ENCODE measurements at regions of chr4 and their contacts with region 1.

Region 1: DNA sequence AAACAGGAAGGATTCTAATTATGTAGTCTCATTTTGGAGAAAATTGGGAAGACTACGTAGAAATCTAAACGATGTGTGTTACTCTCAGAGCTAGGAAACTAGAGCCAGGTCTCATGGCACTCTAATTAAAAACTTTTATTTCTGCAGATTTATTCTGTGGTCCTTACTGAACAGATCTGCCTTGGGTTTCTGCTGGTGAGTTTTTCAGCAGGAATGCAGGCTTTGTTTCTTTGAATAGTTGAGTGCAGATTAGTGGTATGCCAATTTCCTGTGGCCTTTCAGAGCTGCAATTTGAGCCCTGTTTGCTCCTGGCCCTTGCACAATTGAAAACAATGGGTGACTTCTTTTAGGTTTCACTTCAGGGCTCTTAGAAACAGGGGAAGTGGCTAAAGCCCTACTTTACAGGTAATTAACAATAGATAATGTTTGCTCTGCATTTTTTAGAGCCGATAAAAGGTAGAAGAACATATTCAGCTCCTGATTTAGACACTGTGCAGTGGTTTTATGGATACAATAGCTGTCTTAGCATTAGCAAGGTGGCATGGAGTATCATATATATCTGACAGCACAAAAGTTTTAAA is 21.8 kb downstream of the SPRY1 start:
- DNase-seq: peak; percentile 71
- H3K4me3 Mint-ChIP-seq: peak overlapping the region; percentile 57
- H3K27ac Mint-ChIP-seq: peak overlapping the region; percentile 99
- H3K4me1 Mint-ChIP-seq: peaks cover 69% of the 10 kb centered on the region
- H3K27me3 Mint-ChIP-seq: no peaks in the 10 kb centered on the region

Region 2: DNA sequence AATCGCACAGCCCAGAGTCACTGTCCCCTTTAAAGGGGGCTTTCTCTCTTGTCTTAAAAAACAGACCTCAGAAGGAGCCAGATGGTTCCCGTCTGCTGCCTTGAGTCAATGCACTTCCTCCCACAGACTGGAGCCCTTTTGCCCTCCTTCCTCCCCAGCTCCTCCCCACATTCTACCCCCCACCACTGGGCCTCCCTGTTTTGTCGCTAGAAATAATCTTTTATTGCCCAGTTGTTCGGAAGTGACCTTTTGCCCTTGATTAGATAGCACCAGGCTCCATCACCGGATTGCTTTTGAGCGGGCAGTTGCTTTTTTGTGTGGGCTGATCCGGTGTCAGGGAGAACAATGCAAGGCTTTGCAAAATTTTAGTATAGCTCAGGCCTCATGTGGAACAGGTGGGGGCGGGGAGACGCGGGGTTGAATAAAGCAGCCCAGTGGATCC is 25.9 kb after region 1 on chr4:
- intact Hi-C with region 1: loop called (anchors 1 kb)
- DNase-seq: peak; percentile 81
- H3K4me3 Mint-ChIP-seq: peak overlapping the region; percentile 82
- H3K27ac Mint-ChIP-seq: peak overlapping the region; percentile 96
- H3K4me1 Mint-ChIP-seq: peaks cover 24% of the 10 kb centered on the region
- H3K27me3 Mint-ChIP-seq: no peaks in the 10 kb centered on the region

Region 3: GRCh38 chr4:123488916-123489315 is 70.5 kb after region 1 on chr4:
- intact Hi-C with region 1: loop called (anchors 2 kb)
- DNase-seq: peak; percentile 63
- H3K4me3 Mint-ChIP-seq: no peak overlapping the region
- H3K27ac Mint-ChIP-seq: peak overlapping the region; percentile 72
- H3K4me1 Mint-ChIP-seq: peaks cover 14% of the 10 kb centered on the region
- H3K27me3 Mint-ChIP-seq: no peaks in the 10 kb centered on the region

Region 4: DNA sequence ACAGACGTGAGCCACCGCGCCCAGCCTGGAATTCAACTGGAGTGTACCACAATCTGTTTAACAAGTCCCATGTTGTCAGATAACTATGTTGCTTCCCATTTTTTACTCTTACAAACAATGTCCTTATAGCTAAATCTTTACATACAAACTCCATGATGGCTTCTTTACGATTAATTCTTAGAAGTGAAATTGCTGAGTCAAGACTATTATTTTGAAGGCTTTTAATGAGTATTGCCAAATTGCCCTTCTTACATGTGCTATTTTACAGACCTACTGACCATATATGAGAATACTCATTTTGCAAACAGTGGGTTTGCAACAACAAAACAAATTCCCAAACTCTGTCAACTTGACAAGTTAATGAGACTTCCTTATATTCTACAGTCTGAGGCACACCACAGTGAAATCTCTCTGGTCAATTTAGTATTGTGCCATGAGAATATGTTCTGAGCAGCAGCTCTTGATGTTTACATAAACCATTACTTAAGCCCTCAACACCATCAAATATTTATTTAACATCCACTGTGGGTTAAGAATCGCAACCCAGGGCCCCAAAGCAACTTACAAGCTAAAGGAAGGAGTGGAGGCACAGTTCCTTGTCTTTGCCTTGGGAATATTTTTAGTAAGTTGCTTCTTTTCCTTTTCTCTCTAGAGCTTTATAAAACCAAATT is 106.7 kb after region 1 on chr4:
- intact Hi-C with region 1: loop called (anchors 5 kb)
- DNase-seq: peak; percentile 25
- H3K4me3 Mint-ChIP-seq: no peak overlapping the region
- H3K27ac Mint-ChIP-seq: no peak overlapping the region
- H3K4me1 Mint-ChIP-seq: peaks cover 11% of the 10 kb centered on the region
- H3K27me3 Mint-ChIP-seq: peaks cover 3% of the 10 kb centered on the region

Measured in activated CD4-positive, alpha-beta T cell treated with anti-CD3 and anti-CD28 coated beads, Interleukin-2, amount 10 ng/mL, durations not matched to agents 24 days and 14 days (primary cell).